Dorsolateral prefrontal cortex (tissue), 120 donors: ENCODE measurements at regions of chr18 and their contacts with region 1.

Region 1: GRCh38 chr18:28158083-28158581 is 18.8 kb downstream of the CDH2 start:
- DNase-seq: no peak
- H3K4me3 ChIP-seq: peak overlapping the region in 24 of 59 donors; percentile 1 to 53 (median 22)
- H3K27ac ChIP-seq: peak overlapping the region in 46 of 59 donors; percentile 4 to 73 (median 43)
- H3K27me3 ChIP-seq: no peaks in the 10 kb centered on the region
- CTCF ChIP-seq: peak in 40 of 56 donors; percentile 6 to 56 (median 33)

Region 2: DNA sequence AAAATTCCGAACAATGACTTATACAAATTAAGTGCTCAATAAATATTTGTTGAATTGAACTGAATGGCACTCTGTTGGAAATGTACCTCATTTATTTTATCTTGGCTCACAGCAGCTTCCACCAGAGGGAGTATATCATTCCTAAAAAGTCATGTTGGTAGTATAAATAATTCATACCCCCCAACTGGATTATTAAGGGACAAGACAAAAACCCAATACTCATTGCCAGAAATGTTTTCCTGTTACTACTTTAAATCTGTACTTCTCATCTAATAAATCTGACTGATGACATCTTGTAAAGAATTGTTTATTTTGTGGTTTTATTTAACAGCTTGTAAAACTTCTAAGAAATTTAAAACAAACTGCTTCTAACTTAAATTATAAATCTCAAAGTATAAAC is 145.1 kb before region 1 on chr18:
- intact Hi-C with region 1: loop called in 1 of 2 experiments (anchors 5 kb)
- DNase-seq: no peak
- H3K4me3 ChIP-seq: no peak overlapping the region
- H3K27ac ChIP-seq: no peak overlapping the region
- H3K27me3 ChIP-seq: no peaks in the 10 kb centered on the region
- CTCF ChIP-seq: peak in 55 of 56 donors; percentile 30 to 71 (median 55)